BJ (cell line): ENCODE measurements at regions of chr5 and their contacts with region 1.

Region 1: GRCh38 chr5:180831139-180832048 is 28.8 kb upstream of the MGAT1 start:
- DNase-seq: peak; percentile 11
- H3K4me3 ChIP-seq: peak overlapping the region; percentile 47
- H3K27me3 ChIP-seq: no peaks in the 10 kb centered on the region
- CTCF ChIP-seq: no peak; the same call in 1 of the 2 replicates

Region 2: DNA sequence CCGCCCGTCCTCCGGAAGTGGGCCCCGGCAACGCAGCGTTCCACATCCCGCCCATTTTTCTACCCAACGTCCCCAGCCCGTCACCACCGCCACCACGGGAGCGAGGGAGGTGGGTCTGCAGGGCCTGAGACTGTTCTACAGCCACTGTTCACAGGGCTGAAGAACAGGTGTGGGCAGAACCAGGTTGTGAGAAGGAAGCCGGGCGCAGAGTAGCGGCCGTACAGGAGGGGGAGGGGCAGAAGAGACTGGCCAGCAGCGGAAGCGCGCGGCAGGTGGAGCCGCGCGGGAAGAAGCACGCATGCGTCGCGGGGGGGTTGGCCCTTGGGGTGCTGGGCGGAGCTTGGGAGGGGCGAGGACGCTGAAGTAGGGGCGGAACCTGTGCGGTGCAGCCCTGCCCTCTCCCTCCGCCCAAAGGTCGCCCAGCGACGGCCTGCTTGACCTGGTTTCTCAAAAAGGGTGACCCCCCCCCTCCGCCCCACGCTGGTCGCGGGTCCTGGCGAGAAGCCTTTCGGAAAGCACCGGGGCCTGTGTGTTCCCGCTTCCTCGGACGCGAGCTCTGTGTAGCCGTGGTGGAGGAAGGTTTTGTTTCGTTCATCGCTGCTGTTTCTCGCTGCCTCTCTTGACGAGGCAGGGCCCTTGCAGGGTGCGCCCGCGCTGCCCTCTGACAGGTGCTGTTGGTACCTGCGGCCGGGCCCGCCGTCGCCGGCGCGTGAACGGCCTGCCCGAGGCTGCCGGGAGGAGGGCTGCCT is 21.0 kb before region 1 on chr5:
- CTCF ChIA-PET with region 1: no interaction called
- POLR2A ChIA-PET with region 1: interaction called, 12 read pairs
- DNase-seq: peak; percentile 65
- H3K4me3 ChIP-seq: peak overlapping the region; percentile 69
- H3K27me3 ChIP-seq: no peaks in the 10 kb centered on the region
- CTCF ChIP-seq: no peak